ENCODE measurements at regions of chr4 and their contacts with region 1.

Region 1: GRCh38 chr4:89434364-89434988 is 126.9 kb upstream of the GPRIN3 start:
- DNase-seq: no peak
- ATAC-seq: peak; percentile 59
- H3K4me3 Mint-ChIP-seq: no peak overlapping the region
- H3K27ac Mint-ChIP-seq: no peak overlapping the region
- H3K4me1 Mint-ChIP-seq: peaks cover 10% of the 10 kb centered on the region
- H3K27me3 Mint-ChIP-seq: no peaks in the 10 kb centered on the region
- CTCF ChIP-seq: peak; percentile 66

Region 2: GRCh38 chr4:89158884-89159503 is 275.5 kb before region 1 on chr4:
- CTCF ChIA-PET with region 1: interaction called, 11 read pairs
- POLR2A ChIA-PET with region 1: no interaction called
- intact Hi-C with region 1: loop called (anchors 2 kb)
- DNase-seq: no peak
- ATAC-seq: peak; percentile 49
- H3K4me3 Mint-ChIP-seq: no peak overlapping the region
- H3K27ac Mint-ChIP-seq: no peak overlapping the region
- H3K4me1 Mint-ChIP-seq: no peaks in the 10 kb centered on the region
- H3K27me3 Mint-ChIP-seq: peaks cover 4% of the 10 kb centered on the region
- CTCF ChIP-seq: peak; percentile 87

Region 3: GRCh38 chr4:89184407-89184806 is 250.1 kb before region 1 on chr4:
- CTCF ChIA-PET with region 1: no interaction called
- POLR2A ChIA-PET with region 1: no interaction called
- intact Hi-C with region 1: no loop called
- DNase-seq: no peak
- ATAC-seq: no peak
- H3K4me3 Mint-ChIP-seq: no peak overlapping the region
- H3K27ac Mint-ChIP-seq: no peak overlapping the region
- H3K4me1 Mint-ChIP-seq: no peaks in the 10 kb centered on the region
- H3K27me3 Mint-ChIP-seq: peaks cover 9% of the 10 kb centered on the region
- CTCF ChIP-seq: no peak

Region 4: GRCh38 chr4:89463341-89463740 is 28.9 kb after region 1 on chr4:
- CTCF ChIA-PET with region 1: no interaction called
- POLR2A ChIA-PET with region 1: no interaction called
- intact Hi-C with region 1: no loop called
- DNase-seq: no peak
- ATAC-seq: no peak
- H3K4me3 Mint-ChIP-seq: no peak overlapping the region
- H3K27ac Mint-ChIP-seq: no peak overlapping the region
- H3K4me1 Mint-ChIP-seq: no peaks in the 10 kb centered on the region
- H3K27me3 Mint-ChIP-seq: no peaks in the 10 kb centered on the region
- CTCF ChIP-seq: no peak

Region 5: DNA sequence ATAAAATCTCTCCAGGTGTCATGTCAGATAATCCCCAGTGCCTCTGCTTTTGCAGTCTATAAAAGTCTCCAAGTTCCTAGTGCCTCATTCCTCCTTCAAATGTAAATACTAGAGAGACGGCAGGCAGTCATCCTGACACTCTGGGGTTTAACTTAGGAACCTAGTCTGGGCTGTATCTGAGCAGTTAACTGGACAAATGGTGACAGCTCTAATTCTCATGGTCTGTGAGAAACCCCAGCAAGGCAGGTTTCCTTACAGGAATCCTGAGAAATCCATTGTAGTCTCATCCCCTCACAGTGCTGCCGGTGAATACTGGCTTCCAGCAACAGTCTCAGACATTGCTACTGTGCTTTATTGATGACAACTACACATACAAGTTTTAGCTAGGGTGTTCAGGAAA is 155.7 kb after region 1 on chr4:
- CTCF ChIA-PET with region 1: no interaction called
- POLR2A ChIA-PET with region 1: no interaction called
- intact Hi-C with region 1: no loop called
- DNase-seq: no peak
- ATAC-seq: no peak
- H3K4me3 Mint-ChIP-seq: no peak overlapping the region
- H3K27ac Mint-ChIP-seq: no peak overlapping the region
- H3K4me1 Mint-ChIP-seq: no peaks in the 10 kb centered on the region
- H3K27me3 Mint-ChIP-seq: no peaks in the 10 kb centered on the region
- CTCF ChIP-seq: no peak

Measured in activated CD8-positive, alpha-beta T cell treated with anti-CD3 and anti-CD28 coated beads for 36 hours (primary cell).